Breast epithelium (tissue), 4 donors: ENCODE measurements at regions of chr3 and their contacts with region 1.

Region 1: GRCh38 chr3:8283193-8283592 is 218.4 kb upstream of the LMCD1 start:
- DNase-seq: no peak
- H3K4me3 ChIP-seq: no peak overlapping the region
- H3K27ac ChIP-seq: no peak overlapping the region
- H3K4me1 ChIP-seq: no peaks in the 10 kb centered on the region
- H3K27me3 ChIP-seq: no peaks in the 10 kb centered on the region
- CTCF ChIP-seq: no peak
- POLR2A ChIP-seq: no peak

Region 2: GRCh38 chr3:7874116-7874515 is 409.1 kb before region 1 on chr3:
- intact Hi-C with region 1: no loop called
- DNase-seq: no peak
- H3K4me3 ChIP-seq: no peak overlapping the region
- H3K27ac ChIP-seq: no peak overlapping the region
- H3K4me1 ChIP-seq: no peaks in the 10 kb centered on the region
- H3K27me3 ChIP-seq: no peaks in the 10 kb centered on the region
- CTCF ChIP-seq: no peak
- POLR2A ChIP-seq: no peak

Region 3: GRCh38 chr3:8307545-8308110 is 24.4 kb after region 1 on chr3:
- intact Hi-C with region 1: loop called (anchors 2 kb)
- DNase-seq: no peak
- H3K4me3 ChIP-seq: no peak overlapping the region
- H3K27ac ChIP-seq: no peak overlapping the region
- H3K4me1 ChIP-seq: no peaks in the 10 kb centered on the region
- H3K27me3 ChIP-seq: no peaks in the 10 kb centered on the region
- CTCF ChIP-seq: no peak
- POLR2A ChIP-seq: no peak